ENCODE measurements at regions of chr1 and their contacts with region 1.

Region 1: DNA sequence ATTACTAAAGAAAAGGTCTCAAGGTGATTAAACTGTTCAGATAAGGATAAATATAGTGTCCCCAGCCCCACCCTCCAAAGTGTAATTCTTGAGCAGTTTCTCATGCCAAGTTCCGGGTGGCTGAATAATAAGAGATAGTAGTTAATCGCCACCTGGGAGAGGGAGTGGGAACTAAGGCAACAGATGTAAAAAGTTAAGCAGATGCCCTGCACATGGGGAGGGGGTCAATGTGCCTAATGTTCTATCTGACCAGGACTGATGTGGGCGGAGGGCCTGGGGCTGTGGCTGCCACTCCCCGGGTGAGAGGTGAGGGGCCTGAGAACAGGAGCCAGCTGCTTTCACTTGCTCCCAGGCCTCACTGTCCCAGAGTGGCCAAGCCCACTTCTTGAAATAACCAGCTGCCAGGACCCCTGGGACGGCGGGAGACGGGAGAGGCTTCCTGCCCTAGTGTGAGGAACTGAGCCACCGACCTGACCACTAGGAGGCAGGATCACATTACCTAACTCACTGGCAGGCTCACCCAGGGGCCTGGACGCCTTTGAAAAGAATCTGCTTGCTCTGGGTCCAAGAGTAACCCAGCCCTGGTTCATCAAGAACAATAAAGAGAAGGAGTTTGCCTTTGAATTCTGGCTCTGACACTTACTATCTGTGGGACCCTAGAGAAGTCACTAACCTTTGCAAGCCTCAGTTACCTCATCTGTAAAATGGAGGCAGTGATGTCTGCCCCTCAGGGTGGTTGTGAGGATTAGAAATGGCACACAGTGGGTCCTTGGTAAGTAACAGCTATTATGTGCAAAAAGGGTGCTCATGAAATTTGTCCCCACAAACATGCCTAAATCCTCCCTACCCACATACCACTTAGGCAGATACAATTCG is 179.2 kb downstream of the ATG4C start:
- DNase-seq: no peak

Region 2: DNA sequence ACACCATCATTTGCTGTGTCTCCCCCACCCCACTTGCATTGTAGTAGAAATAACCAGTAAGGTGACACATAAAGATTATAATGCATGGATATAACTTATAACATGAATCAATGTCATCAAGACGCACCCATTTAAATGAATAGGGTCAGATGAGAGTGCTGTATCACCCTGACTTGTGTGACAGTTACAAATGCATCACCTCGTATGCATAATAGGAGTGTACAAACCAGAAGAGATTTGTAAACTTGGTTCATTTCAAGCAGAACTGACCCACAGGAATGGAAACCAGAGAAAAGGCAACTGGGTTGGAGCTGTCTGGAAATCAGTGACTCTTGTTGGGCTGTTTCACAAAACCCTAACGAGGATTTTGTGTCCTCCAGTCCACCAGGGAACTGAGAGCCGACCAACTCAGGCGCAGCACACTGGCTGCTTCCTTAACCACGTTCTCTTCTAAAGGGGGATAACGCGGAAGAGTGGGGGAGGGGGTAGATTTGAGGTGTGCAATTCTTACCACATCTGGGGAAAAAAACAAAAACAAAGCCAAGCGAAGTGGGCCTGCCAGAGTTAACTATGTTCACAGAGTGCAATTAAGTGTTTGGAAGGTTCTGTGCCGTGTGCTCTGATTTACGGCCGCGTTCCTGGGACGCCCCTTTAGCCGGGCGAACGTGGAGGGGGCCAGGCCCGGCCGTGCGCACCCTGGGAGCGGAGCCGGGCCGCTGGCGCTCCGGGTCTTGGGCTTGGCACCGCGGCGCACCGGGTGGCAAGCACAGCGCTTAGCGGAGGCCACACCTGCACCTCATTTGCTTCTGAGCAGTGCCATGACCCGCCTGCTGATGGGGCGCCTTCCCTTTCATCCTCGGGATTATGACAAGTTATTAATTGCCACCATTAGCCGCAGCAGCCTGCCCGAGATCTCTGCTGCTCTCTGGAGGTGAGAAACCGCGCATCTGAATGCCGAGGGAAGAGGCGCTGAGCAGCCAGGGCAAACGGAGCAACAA is 110.5 kb after region 1 on chr1:
- intact Hi-C with region 1: loop called (anchors 5 kb)
- DNase-seq: no peak

Region 3: DNA sequence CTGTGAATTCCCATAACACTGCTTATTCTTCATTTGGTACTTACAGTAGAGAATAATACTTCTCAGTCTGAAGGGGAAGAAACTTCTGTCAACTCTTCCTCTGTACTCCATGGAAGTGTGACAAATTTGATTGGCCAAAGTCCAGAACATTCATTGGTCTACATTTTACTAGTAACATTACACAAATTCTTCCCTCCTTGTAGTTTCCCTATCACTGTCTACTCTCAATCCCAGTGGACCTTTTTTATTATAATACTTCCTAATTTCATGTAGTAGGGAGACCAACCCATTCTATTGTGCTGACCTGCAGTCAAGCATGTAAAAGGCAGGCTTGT is 479.0 kb after region 1 on chr1:
- intact Hi-C with region 1: loop called (anchors 2 kb)
- DNase-seq: no peak

Measured in cardiac septum (tissue), 1 donor.